ENCODE measurements at regions of chr14 and their contacts with region 1.

Region 1: GRCh38 chr14:32190672-32191071 is 11.2 kb upstream of the RNU6-7 start:
- DNase-seq: no peak
- H3K4me3 Mint-ChIP-seq: no peak overlapping the region
- H3K27ac Mint-ChIP-seq: no peak overlapping the region
- H3K4me1 Mint-ChIP-seq: peaks cover 10% of the 10 kb centered on the region
- H3K27me3 Mint-ChIP-seq: peaks cover 3% of the 10 kb centered on the region

Region 2: GRCh38 chr14:32102152-32102787 is 88.4 kb before region 1 on chr14:
- CTCF ChIA-PET with region 1: no interaction called
- POLR2A ChIA-PET with region 1: no interaction called
- intact Hi-C with region 1: loop called (anchors 1 kb)
- DNase-seq: peak; percentile 27
- H3K4me3 Mint-ChIP-seq: no peak overlapping the region
- H3K27ac Mint-ChIP-seq: peak overlapping the region; percentile 75
- H3K4me1 Mint-ChIP-seq: peaks cover 54% of the 10 kb centered on the region
- H3K27me3 Mint-ChIP-seq: no peaks in the 10 kb centered on the region

Region 3: GRCh38 chr14:32167907-32168306 is 22.8 kb before region 1 on chr14:
- CTCF ChIA-PET with region 1: no interaction called
- POLR2A ChIA-PET with region 1: no interaction called
- intact Hi-C with region 1: loop called (anchors 2 kb)
- DNase-seq: no peak
- H3K4me3 Mint-ChIP-seq: no peak overlapping the region
- H3K27ac Mint-ChIP-seq: no peak overlapping the region
- H3K4me1 Mint-ChIP-seq: no peaks in the 10 kb centered on the region
- H3K27me3 Mint-ChIP-seq: no peaks in the 10 kb centered on the region

Region 4: GRCh38 chr14:32332415-32333316 is 142.0 kb after region 1 on chr14:
- CTCF ChIA-PET with region 1: no interaction called
- POLR2A ChIA-PET with region 1: no interaction called
- intact Hi-C with region 1: loop called (anchors 1 kb)
- DNase-seq: peak; percentile 49
- H3K4me3 Mint-ChIP-seq: no peak overlapping the region
- H3K27ac Mint-ChIP-seq: no peak overlapping the region
- H3K4me1 Mint-ChIP-seq: peaks cover 5% of the 10 kb centered on the region
- H3K27me3 Mint-ChIP-seq: no peaks in the 10 kb centered on the region

Region 5: GRCh38 chr14:32397861-32398640 is 207.4 kb after region 1 on chr14:
- CTCF ChIA-PET with region 1: no interaction called
- POLR2A ChIA-PET with region 1: no interaction called
- intact Hi-C with region 1: no loop called
- DNase-seq: no peak
- H3K4me3 Mint-ChIP-seq: no peak overlapping the region
- H3K27ac Mint-ChIP-seq: no peak overlapping the region
- H3K4me1 Mint-ChIP-seq: no peaks in the 10 kb centered on the region
- H3K27me3 Mint-ChIP-seq: no peaks in the 10 kb centered on the region

Region 6: GRCh38 chr14:32702562-32702961 is 511.9 kb after region 1 on chr14:
- CTCF ChIA-PET with region 1: no interaction called
- POLR2A ChIA-PET with region 1: no interaction called
- intact Hi-C with region 1: loop called (anchors 5 kb)
- DNase-seq: peak; percentile 62
- H3K4me3 Mint-ChIP-seq: no peak overlapping the region
- H3K27ac Mint-ChIP-seq: peak overlapping the region; percentile 80
- H3K4me1 Mint-ChIP-seq: peaks cover 7% of the 10 kb centered on the region
- H3K27me3 Mint-ChIP-seq: no peaks in the 10 kb centered on the region

Measured in activated CD4-positive, alpha-beta memory T cell treated with anti-CD3 and anti-CD28 coated beads for 36 hours (primary cell).